ENCODE measurements at regions of chr3 and their contacts with region 1.

Region 1: GRCh38 chr3:141231101-141231935 is at the start of gene PXYLP1:
- DNase-seq: peak; percentile 96
- H3K4me3 ChIP-seq: peak within 1 kb of the TSS; percentile 80 to 95 (median 92)
- H3K27ac ChIP-seq: peak within 1 kb of the TSS; percentile 86 to 93 (median 90)
- H3K4me1 ChIP-seq: peaks cover 0 to 24% (median 15%) of the 10 kb centered on the region in 4 donors
- H3K27me3 ChIP-seq: no peaks in the 10 kb centered on the region
- CTCF ChIP-seq: peak in 1 of 4 experiments; percentile 61
- EP300 ChIP-seq: no peak
- POLR2A ChIP-seq: peak; percentile 33 to 52
- total RNA-seq, gene PXYLP1: 5.7 to 12.2 (median 7.5) TPM

Region 2: GRCh38 chr3:140766465-140766864 is 464.9 kb before region 1 on chr3:
- intact Hi-C with region 1: no loop called
- DNase-seq: no peak
- H3K4me3 ChIP-seq: no peak overlapping the region
- H3K27ac ChIP-seq: no peak overlapping the region
- H3K4me1 ChIP-seq: no peaks in the 10 kb centered on the region
- H3K27me3 ChIP-seq: no peaks in the 10 kb centered on the region
- CTCF ChIP-seq: no peak
- EP300 ChIP-seq: no peak
- POLR2A ChIP-seq: no peak

Region 3: DNA sequence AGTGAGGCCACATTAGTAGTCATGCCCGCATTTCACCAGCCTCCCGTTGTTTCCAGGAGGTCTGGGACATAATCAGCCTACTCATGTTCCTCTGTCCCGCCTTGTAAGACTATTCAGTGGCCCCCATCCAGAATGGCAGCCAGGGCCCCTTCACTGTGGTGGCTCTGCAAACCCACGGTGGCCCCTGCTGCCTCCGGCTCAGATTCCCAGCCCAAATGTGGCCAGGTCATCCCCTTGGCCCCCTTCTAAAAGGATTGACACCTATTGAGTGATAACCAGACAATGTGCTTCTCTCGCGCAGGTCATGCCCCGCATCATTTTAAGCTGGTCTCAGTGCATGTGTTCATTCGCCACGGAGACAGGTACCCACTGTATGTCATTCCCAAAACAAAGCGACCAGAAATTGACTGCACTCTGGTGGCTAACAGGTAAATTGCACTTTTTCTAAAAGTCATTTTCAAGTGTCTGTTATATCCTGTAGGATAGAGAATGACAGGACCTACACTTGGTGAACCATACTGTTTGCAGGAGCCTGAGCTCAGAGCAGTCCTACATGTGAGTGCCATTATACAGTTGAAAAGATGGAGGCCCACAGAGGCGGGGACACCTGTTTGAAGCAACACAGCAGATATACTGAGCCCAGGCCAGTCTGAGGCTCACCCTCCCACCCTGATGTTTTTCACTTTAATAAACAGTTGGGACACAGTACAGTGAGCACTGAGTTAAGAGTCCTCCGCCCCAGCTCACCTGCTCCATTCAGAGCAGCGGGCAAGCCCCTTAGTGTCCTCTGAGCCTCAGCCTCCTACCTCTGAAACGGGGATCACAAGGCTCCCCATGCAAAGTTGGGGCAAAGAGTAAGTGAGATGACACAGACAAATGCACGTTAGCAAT is 48.0 kb after region 1 on chr3:
- intact Hi-C with region 1: loop called (anchors 1 kb)
- DNase-seq: no peak
- H3K4me3 ChIP-seq: no peak overlapping the region
- H3K27ac ChIP-seq: peak overlapping the region; percentile 53 to 85 (median 71)
- H3K4me1 ChIP-seq: peaks cover 0 to 23% (median 20%) of the 10 kb centered on the region in 4 donors
- H3K27me3 ChIP-seq: no peaks in the 10 kb centered on the region
- CTCF ChIP-seq: peak; percentile 19 to 54 (median 38)
- EP300 ChIP-seq: no peak
- POLR2A ChIP-seq: no peak

Region 4: DNA sequence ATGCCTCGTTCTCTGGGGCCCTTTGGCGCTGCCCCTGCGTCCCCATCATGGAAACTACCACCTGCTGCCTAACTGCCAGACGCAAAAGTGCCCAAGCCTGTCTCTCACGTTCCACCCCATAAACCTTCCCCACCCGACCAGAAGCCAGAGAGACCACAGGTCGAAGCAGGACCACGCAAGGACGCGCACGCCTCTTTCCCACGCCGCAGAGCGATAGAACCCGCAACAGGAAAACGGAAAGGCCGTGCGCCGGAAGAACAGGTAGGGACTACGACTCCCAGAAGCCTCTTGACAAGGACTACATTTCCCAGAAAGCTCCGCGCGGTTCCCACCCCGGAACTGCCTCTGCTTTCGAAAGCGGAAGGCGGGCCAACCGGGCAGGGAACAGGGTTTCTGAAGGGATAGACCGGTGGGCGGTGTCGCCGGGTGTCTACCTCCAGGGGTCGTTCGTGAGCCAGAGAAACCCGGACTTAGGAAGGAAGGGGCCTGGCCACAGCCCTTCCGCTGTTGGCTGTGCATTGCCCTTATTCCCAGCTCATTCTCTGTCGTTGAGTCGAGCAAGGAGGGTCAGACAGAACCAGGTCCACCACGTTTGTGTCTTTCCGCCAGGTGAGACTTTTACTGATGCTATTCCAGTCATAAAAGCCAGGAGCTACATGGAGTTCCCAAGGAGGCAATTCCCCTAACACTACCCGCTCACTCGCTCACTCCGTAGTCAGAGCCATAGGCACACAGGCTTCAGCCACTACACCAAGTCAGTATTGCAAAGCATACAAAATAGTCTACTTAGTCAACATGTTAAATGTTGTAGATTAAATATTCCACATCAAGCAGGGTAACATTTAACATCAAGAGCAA is 80.4 kb after region 1 on chr3:
- intact Hi-C with region 1: no loop called
- DNase-seq: peak; percentile 99
- H3K4me3 ChIP-seq: peak overlapping the region; percentile 56 to 68 (median 59)
- H3K27ac ChIP-seq: peak overlapping the region; percentile 73 to 84 (median 77)
- H3K4me1 ChIP-seq: peaks cover 0 to 19% (median 14%) of the 10 kb centered on the region in 4 donors
- H3K27me3 ChIP-seq: no peaks in the 10 kb centered on the region
- CTCF ChIP-seq: peak; percentile 51 to 75 (median 69)
- EP300 ChIP-seq: peak in 1 of 4 donors; percentile 77
- POLR2A ChIP-seq: peak; percentile 18 to 33

Measured in sigmoid colon (tissue), 7 donors.